Aorta (tissue), 5 donors: ENCODE measurements at regions of chr17 and their contacts with region 1.

Region 1: GRCh38 chr17:81238817-81239600 is at the starts of genes NDUFAF8 and TEPSIN:
- DNase-seq: peak; percentile 97 to 98
- ATAC-seq: peak; percentile 98
- H3K4me3 ChIP-seq: peak within 1 kb of the TSS; percentile 71 to 87
- H3K27ac ChIP-seq: peak within 1 kb of the TSS in 1 of 2 donors; percentile 54
- H3K4me1 ChIP-seq: no peaks in the 10 kb centered on the region
- H3K27me3 ChIP-seq: no peaks in the 10 kb centered on the region
- total RNA-seq, gene NDUFAF8: 20.2 to 27.4 TPM
- total RNA-seq, gene TEPSIN: 25.6 to 44.4 TPM

Region 2: GRCh38 chr17:81109957-81110356 is 129.1 kb before region 1 on chr17:
- intact Hi-C with region 1: no loop called
- DNase-seq: no peak
- ATAC-seq: no peak
- H3K4me3 ChIP-seq: no peak overlapping the region
- H3K27ac ChIP-seq: no peak overlapping the region
- H3K4me1 ChIP-seq: no peaks in the 10 kb centered on the region
- H3K27me3 ChIP-seq: no peaks in the 10 kb centered on the region

Region 3: DNA sequence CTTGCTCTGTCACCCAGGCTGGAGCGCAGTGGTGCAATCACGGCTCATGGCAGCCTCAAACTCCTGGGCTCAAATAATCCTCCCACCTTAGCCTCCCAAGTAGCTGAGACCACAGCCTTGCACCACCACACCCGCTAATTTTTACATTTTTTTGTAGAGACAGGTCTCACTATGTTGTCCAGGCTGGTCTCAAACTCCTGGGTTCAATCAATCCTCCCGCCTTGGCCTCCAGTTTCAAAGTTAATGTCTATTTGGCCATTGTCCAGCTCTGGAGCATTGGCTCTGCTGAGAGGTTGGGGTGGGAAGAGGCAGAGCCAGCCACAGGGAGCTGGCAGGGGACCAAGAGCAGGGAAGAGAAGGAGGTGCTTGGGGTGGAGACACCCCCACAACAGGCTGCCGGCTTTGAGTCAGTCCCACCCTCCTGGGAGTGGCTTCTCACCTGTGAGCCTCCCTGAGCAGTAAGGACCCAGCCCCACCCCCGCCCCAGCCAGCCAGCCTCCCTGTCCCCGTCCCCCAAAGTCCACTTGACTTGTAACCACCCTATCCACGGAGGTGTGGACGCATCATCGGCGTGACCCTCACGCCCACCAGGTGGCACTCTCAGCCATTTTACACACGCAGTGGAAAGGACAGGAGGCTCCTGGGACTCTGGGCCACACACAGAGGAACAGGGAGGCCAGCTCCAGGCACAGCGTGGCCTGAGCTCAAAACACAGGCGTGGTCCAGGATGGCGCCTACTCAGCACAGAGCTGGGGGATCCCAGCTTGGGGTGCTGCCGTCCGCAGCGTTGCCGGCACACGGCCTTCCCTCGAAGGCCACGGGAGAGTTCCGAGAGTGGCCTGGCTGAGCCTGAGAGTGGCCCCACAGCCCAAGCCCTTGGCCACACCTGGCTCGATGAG is 96.5 kb before region 1 on chr17:
- intact Hi-C with region 1: loop called (anchors 1 kb)
- DNase-seq: peak; percentile 88 to 94
- ATAC-seq: peak; percentile 88
- H3K4me3 ChIP-seq: no peak overlapping the region
- H3K27ac ChIP-seq: no peak overlapping the region
- H3K4me1 ChIP-seq: no peaks in the 10 kb centered on the region
- H3K27me3 ChIP-seq: no peaks in the 10 kb centered on the region

Region 4: GRCh38 chr17:81222906-81223761 is 15.9 kb before region 1 on chr17 and contains the start of gene CEP131:
- intact Hi-C with region 1: loop called in 1 of 2 experiments (anchors 2 kb)
- DNase-seq: peak; percentile 100
- ATAC-seq: peak; percentile 99
- H3K4me3 ChIP-seq: peak within 1 kb of the TSS; percentile 19 to 59
- H3K27ac ChIP-seq: no peak within 1 kb of the TSS
- H3K4me1 ChIP-seq: no peaks in the 10 kb centered on the region
- H3K27me3 ChIP-seq: no peaks in the 10 kb centered on the region
- total RNA-seq, gene CEP131: 6.7 to 11.3 TPM